ENCODE measurements at regions of chr17 and their contacts with region 1.

Region 1: GRCh38 chr17:35747540-35748017 is 5.5 kb downstream of the GAS2L2 start:
- DNase-seq: peak; percentile 90
- CTCF ChIP-seq: peak; percentile 90

Region 2: GRCh38 chr17:35612924-35613521 is 134.6 kb before region 1 on chr17:
- in situ Hi-C with region 1: loop called (anchors 25 kb)
- DNase-seq: peak; percentile 30
- CTCF ChIP-seq: peak; percentile 70

Region 3: DNA sequence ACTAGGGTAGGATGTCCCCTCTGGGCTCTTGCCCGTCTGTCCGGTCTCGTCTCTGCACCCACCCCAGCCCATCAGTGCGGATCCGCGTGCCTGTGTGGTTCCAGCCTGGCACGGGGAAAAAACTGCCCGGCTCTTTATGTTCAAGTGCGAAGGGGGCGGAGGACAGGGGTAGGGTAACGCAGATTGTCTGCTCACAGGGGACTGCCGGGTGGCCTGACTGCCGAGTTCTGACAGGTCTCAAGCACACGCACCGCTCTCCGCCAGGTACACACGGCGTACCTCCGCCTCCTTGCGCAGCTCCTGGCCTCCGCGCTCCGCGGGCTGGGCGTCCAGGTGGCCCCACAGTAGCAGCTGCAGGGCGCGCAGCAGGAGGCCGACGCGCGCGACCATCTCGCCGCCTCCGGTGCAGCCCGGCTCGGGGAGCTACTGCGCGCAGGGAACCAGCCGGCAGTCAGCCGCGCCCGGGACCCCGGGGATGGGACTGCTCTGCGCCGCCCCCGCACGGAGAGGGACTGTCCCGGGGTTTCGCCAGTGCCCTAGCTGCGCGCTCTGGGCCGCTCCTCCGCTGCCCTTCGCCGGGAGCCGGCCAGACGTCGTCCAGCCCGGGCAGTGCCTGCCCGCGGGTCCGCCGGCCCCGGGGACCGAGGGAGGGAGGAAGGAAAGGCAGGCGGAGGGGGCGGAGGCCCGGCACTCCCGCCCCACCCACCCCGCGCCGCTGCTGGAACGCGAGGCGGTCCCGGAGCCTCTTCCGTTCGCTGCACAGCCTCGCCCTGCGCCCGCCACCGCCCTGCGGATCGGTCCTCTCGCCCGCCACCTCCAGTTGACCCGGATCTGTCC is 47.6 kb after region 1 on chr17 and contains the start of gene MMP28:
- in situ Hi-C with region 1: no loop called
- DNase-seq: peak; percentile 62
- CTCF ChIP-seq: no peak

Measured in GM13977 (cell line).